Heart left ventricle (tissue), 16 donors: ENCODE measurements at regions of chr14 and their contacts with region 1.

Region 1: GRCh38 chr14:67619446-67620216 is at the start of gene ARG2:
- DNase-seq: peak; percentile 96 to 98 (median 97)
- ATAC-seq: peak; percentile 93 to 99 (median 98)
- H3K4me3 ChIP-seq: peak within 1 kb of the TSS; percentile 31 to 74 (median 67)
- H3K27ac ChIP-seq: peak within 1 kb of the TSS in 6 of 12 donors; percentile 11 to 76 (median 49)
- H3K4me1 ChIP-seq: peaks cover 0 to 32% (median 11%) of the 10 kb centered on the region in 12 donors
- H3K27me3 ChIP-seq: no peaks in the 10 kb centered on the region
- CTCF ChIP-seq: peak in 3 of 12 donors; percentile 5 to 22 (median 21)
- POLR2A ChIP-seq: peak in 1 of 2 donors; percentile 48
- total RNA-seq, gene ARG2: 0.61 to 6.3 (median 1.5) TPM

Region 2: GRCh38 chr14:67666750-67667449 is 47.3 kb after region 1 on chr14:
- intact Hi-C with region 1: loop called (anchors 1 to 5 kb)
- DNase-seq: no peak
- ATAC-seq: peak in 3 of 4 donors; percentile 61 to 79 (median 66)
- H3K4me3 ChIP-seq: no peak overlapping the region
- H3K27ac ChIP-seq: peak overlapping the region in 1 of 12 donors; percentile 6
- H3K4me1 ChIP-seq: peaks cover 0 to 49% (median 2%) of the 10 kb centered on the region in 12 donors
- H3K27me3 ChIP-seq: no peaks in the 10 kb centered on the region
- CTCF ChIP-seq: peak; percentile 37 to 67 (median 56)
- POLR2A ChIP-seq: no peak